Activated T-helper 2 cell treated with anti-CD3 and anti-CD28 coated beads, Interferon-gamma antibody, Interleukin-2, Interleukin-4, amounts not matched to agents 10 μg/mL and 5 μg/mL and 100 μg/mL, durations not matched to agents 14 hours and 24 hours and 36 hours (primary cell): ENCODE measurements at regions of chr17 and their contacts with region 1.

Region 1: DNA sequence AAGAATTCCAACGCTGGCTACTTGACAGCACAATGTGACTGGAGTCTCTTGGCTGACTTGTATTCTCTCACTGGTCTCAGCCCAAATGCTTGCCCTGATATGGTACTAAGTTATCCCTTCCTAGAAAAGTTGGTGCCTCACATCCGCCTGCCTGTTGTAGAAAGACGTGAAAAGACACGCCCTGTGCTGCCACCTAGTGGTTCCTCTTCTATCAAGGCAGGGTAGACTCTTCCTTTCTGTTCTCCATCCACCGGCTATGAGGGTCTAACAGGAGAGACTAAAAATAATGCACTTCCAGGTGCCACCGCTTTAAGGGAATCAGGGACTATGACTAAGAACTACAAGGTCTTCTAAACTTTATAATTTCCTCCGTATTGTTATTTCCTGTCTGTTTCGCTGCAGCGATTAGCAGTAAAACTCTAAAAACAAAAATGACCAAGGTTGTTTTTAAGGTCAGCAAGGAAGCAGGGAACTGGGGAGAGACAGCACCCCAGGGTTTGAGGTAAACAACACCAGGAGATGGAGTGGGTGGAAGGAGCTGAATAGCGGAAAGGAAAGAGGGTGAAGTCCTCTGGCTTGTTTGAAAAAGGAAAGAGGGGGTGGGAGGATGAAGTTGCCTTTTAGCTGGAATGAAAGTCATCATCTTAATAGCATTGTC is 109.5 kb downstream of the YPEL2 start:
- DNase-seq: peak; percentile 79
- H3K4me3 Mint-ChIP-seq: peak overlapping the region; percentile 60
- H3K27ac Mint-ChIP-seq: peak overlapping the region; percentile 87
- H3K4me1 Mint-ChIP-seq: peaks cover 55% of the 10 kb centered on the region
- H3K27me3 Mint-ChIP-seq: no peaks in the 10 kb centered on the region

Region 2: GRCh38 chr17:59220376-59221158 is 220.3 kb before region 1 on chr17 and contains the start of gene GDPD1:
- intact Hi-C with region 1: loop called (anchors 10 kb)
- DNase-seq: peak; percentile 96
- H3K4me3 Mint-ChIP-seq: peak within 1 kb of the TSS; percentile 100
- H3K27ac Mint-ChIP-seq: peak within 1 kb of the TSS; percentile 91
- H3K4me1 Mint-ChIP-seq: peaks cover 13% of the 10 kb centered on the region
- H3K27me3 Mint-ChIP-seq: no peaks in the 10 kb centered on the region
- total RNA-seq, gene GDPD1: 2.3 and 2.7 TPM in 2 replicates

Region 3: GRCh38 chr17:59311130-59311920 is 129.6 kb before region 1 on chr17:
- intact Hi-C with region 1: loop called (anchors 1 kb)
- DNase-seq: peak; percentile 33
- H3K4me3 Mint-ChIP-seq: no peak overlapping the region
- H3K27ac Mint-ChIP-seq: no peak overlapping the region
- H3K4me1 Mint-ChIP-seq: peaks cover 3% of the 10 kb centered on the region
- H3K27me3 Mint-ChIP-seq: no peaks in the 10 kb centered on the region

Region 4: GRCh38 chr17:59329638-59330313 is 111.1 kb before region 1 on chr17:
- intact Hi-C with region 1: loop called (anchors 1 kb)
- DNase-seq: peak; percentile 36
- H3K4me3 Mint-ChIP-seq: peak overlapping the region; percentile 63
- H3K27ac Mint-ChIP-seq: peak overlapping the region; percentile 73
- H3K4me1 Mint-ChIP-seq: peaks cover 40% of the 10 kb centered on the region
- H3K27me3 Mint-ChIP-seq: peaks cover 9% of the 10 kb centered on the region

Region 5: DNA sequence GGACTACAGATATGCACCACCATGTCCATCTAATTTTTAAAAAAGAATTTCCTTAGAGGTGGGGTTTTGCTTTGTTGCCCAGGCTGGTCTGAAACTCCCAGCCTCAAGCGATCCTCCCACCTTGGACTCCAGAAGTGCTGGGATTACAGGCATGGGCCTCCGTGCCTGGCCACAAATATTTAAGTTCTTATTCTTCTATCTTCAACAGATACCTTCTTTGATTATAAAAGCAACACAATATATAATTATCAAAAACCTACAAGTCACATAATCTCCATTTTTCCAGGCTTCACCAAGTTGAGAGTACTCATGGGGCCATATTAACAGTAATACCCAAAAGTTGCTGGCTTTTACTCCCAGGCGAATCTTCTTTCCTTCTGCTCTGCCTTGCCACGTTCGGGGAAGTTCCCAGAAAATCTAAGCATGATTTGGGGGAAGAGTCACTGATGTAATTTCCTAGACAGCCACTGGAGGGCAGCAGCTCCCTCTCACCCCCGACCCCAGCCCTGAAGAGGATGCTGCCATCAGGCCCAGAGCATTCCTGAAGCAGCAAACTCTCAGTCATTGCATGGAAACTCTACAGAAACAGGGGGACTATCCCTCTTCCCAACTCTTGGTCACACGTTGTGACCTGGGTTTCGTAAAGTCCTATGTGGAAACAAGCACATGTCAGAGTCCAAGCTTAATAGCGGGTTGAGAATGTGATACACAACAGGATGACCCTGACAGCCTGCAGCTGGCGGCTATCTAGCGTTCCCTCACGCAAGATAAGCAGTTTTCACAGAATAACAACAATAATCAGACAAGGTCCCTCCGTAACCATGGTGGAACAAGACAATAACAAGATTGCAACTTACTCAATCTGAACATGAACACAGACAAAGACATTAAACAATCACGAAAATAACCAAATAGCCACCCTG is 80.6 kb after region 1 on chr17:
- intact Hi-C with region 1: no loop called
- DNase-seq: peak; percentile 32
- H3K4me3 Mint-ChIP-seq: no peak overlapping the region
- H3K27ac Mint-ChIP-seq: no peak overlapping the region
- H3K4me1 Mint-ChIP-seq: peaks cover 6% of the 10 kb centered on the region
- H3K27me3 Mint-ChIP-seq: peaks cover 18% of the 10 kb centered on the region